GM10248 (cell line): ENCODE measurements at regions of chr3 and their contacts with region 1.

Region 1: DNA sequence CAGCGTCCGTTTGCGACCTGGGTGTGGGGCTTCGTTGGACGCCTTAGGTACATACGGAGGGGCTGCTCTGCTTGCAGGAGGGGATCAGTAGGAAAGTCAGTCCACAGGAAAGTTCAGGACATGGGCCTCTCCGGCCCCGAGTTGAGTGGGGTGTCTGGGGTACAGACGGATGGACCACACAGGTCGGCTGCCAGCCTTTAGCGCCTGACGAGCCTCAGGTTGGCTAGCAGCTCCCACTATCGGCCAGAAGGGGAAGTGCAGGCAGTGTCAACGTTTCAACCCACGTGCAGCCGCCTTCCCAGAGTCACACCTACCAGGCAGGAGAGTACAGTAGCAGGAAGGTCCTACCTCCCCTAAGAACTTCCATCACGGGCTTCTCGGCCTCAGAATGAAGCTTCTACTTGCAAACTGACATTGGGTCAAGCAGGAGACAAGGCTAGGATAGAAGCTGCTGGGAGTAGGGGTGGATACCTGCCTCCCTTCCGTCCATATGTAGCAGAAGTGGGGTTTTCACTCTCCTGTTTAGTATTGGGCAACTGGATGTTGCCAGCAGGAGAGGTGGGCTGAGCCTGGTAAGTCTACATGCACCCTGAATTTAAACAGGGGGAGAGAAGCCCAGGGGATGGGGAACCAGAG is 1.8 kb upstream of the SCN5A start:
- DNase-seq: peak; percentile 84
- CTCF ChIP-seq: peak; percentile 99

Region 2: GRCh38 chr3:38411591-38411990 is 239.7 kb before region 1 on chr3:
- CTCF ChIA-PET with region 1: no interaction called
- POLR2A ChIA-PET with region 1: no interaction called
- DNase-seq: no peak
- CTCF ChIP-seq: no peak

Region 3: DNA sequence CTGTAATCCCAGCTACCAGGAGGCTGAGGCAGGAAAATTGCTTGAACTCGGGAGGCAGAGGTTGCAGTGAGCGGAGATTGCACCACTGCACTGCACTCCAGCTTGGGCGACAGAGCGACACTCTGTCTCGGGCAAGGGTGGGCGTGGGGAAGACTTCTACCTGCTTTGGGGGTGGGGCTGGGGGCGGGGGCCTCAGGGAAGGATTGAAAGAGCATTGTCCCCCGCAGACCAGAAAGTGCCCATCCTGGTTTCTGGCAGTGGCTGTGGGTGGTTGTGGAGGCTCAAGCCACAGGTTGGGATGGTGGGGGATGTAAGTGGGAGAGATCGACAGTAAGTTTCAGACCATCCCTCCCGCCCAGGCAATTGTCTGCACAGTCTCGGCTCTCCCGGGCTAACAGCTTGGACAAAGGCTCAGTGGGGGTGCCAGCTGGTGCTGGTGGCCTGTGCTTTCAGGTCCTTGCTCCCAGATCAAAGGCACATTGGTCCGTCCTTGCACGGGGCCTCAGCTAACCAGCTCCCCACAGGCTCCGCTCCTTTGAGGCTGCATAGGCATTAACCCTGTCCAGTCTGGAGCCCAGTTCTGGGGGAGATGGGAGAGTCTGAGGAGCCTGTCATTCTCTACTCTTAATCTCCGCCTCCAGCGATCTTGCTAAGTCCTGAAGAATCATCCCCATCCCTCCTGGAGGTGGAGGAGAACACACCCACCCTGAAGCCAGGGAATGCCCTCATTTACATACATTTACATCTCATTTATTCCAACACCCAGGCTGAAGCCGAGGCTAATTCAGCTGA is 10.4 kb before region 1 on chr3:
- CTCF ChIA-PET with region 1: interaction called, 24 read pairs
- POLR2A ChIA-PET with region 1: no interaction called
- DNase-seq: no peak
- CTCF ChIP-seq: no peak

Region 4: DNA sequence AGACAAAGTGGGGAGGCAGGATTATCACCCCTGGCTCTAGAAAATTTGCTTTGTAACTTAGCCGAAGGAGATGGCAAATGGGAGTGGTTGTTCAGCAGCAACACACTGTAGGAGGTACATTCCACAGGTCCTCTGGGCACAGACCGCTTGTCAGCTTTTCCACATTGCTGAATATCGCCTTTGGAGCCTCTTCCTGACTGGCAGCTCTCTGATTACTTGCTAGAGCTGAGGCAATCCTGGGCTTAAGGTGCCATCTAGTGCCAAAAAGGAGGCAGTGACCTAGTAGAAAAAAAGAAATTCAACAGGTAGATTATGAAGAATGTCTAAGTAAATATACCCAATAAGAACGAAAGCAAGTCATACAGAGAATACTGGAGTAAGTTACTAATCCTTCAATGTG is 11.3 kb after region 1 on chr3:
- CTCF ChIA-PET with region 1: interaction called, 22 read pairs
- POLR2A ChIA-PET with region 1: no interaction called
- DNase-seq: no peak
- CTCF ChIP-seq: no peak

Region 5: GRCh38 chr3:38687321-38687720 is 36.0 kb after region 1 on chr3:
- CTCF ChIA-PET with region 1: interaction called, 10 read pairs
- POLR2A ChIA-PET with region 1: no interaction called
- DNase-seq: no peak
- CTCF ChIP-seq: no peak

Region 6: GRCh38 chr3:39013289-39013688 is 362.0 kb after region 1 on chr3:
- CTCF ChIA-PET with region 1: no interaction called
- POLR2A ChIA-PET with region 1: no interaction called
- DNase-seq: no peak
- CTCF ChIP-seq: no peak